Heart right ventricle (tissue), 16 donors: ENCODE measurements at regions of chr5 and their contacts with region 1.

Region 1: GRCh38 chr5:135466178-135467050 is 14.3 kb upstream of the TIFAB start:
- DNase-seq: peak; percentile 68 to 80
- ATAC-seq: peak; percentile 85 to 97 (median 93)
- H3K4me3 ChIP-seq: peak overlapping the region in 9 of 10 donors; percentile 6 to 44 (median 34)
- H3K27ac ChIP-seq: no peak overlapping the region
- H3K4me1 ChIP-seq: peaks cover 0 to 10% (median 7%) of the 10 kb centered on the region in 9 donors
- H3K27me3 ChIP-seq: peaks cover 3 to 94% (median 75%) of the 10 kb centered on the region in 7 donors
- CTCF ChIP-seq: peak; percentile 71 to 90 (median 86)

Region 2: GRCh38 chr5:135448791-135449507 is 17.5 kb before region 1 on chr5:
- intact Hi-C with region 1: no loop called
- DNase-seq: no peak
- ATAC-seq: no peak
- H3K4me3 ChIP-seq: no peak overlapping the region
- H3K27ac ChIP-seq: no peak overlapping the region
- H3K4me1 ChIP-seq: peaks cover 0 to 22% (median 0%) of the 10 kb centered on the region in 9 donors
- H3K27me3 ChIP-seq: peaks cover 0 to 6% (median 0%) of the 10 kb centered on the region in 7 donors
- CTCF ChIP-seq: no peak

Region 3: DNA sequence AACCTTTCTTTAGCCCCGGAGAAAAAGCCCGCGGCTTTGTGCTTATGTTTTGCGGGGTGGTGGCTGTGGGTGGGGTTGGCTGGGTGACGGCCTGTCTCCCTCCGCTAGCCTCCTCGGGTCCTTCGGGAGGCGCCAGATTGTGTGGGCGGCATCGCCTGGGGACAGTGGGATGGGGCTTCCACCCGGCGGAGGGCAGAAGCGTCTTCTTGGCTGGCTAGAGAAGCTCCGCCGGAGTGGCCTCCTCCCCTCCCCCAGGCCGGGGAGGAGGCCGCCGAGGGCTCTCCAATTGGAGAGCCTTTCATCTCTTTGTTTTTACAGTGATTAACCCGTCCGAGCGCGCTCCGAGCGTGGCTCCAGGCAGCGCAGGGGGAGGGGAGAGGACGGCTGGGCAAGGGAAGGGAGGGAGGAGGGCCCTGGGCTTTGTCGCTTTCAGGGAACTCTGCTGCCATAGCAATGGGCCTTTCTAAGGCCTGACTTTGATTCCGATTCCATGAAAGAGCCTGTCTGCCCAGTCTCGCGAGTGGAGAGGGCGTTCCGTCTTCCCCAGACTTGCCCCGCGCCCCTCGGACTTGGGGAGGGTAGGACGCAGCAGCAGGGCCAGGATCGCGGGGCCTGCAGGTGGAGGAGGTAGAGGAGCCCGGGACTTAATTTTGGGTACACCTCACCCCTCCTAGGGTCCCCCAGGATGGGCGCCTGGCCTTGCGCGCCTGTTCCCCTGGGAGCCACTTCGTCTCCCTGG is 22.5 kb after region 1 on chr5:
- intact Hi-C with region 1: no loop called
- DNase-seq: peak in 1 of 2 donors; percentile 14
- ATAC-seq: peak in 4 of 8 donors; percentile 26 to 55 (median 41)
- H3K4me3 ChIP-seq: peak overlapping the region; percentile 5 to 46 (median 36)
- H3K27ac ChIP-seq: no peak overlapping the region
- H3K4me1 ChIP-seq: peaks cover 2 to 38% (median 23%) of the 10 kb centered on the region in 9 donors
- H3K27me3 ChIP-seq: peaks cover 31 to 95% (median 88%) of the 10 kb centered on the region in 7 donors
- CTCF ChIP-seq: no peak

Region 4: DNA sequence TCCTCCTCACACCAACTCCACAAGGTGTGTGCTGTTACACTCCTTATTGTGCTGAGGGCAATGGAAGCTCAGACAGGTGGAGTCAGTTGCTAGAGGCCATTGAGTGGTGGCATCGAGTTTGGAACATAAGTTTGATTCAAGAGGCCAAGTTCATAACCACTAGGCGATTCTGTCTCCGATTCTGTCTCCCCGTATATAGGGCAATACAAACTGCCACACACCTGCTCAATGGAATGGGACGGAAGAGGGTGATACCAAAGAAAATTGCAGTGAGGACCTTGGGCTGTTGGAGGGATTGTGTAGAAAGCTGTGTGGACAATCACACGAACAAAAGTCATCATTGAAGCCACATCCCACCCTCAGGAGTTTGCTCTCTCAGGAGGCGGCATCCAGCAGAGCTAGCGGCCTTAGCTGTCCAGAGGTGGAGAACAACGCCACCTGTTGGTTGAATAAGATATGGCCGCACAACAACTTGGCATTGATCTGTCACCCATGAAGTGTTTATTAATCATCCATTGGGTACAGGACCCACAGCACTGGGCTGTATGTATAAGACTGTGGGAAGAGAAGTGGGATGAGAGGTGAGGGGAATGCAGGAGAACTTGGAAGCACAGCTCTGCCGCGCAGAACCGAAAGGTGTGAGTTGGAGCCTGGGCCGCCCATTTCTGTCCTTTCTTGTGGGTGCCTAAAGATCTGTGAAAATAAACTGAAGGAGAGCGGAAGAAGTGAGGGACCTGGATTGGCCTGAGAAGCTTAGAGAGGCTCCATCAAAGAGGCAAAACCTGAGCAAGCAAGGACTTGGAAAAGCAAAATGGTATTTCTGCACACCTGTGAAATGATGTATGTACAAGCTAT is 85.4 kb after region 1 on chr5:
- intact Hi-C with region 1: loop called (anchors 1 to 2 kb)
- DNase-seq: peak; percentile 34 to 64
- ATAC-seq: peak; percentile 63 to 80 (median 76)
- H3K4me3 ChIP-seq: no peak overlapping the region
- H3K27ac ChIP-seq: no peak overlapping the region
- H3K4me1 ChIP-seq: no peaks in the 10 kb centered on the region
- H3K27me3 ChIP-seq: peaks cover 0 to 93% (median 87%) of the 10 kb centered on the region in 7 donors
- CTCF ChIP-seq: peak; percentile 69 to 89 (median 84)

Region 5: DNA sequence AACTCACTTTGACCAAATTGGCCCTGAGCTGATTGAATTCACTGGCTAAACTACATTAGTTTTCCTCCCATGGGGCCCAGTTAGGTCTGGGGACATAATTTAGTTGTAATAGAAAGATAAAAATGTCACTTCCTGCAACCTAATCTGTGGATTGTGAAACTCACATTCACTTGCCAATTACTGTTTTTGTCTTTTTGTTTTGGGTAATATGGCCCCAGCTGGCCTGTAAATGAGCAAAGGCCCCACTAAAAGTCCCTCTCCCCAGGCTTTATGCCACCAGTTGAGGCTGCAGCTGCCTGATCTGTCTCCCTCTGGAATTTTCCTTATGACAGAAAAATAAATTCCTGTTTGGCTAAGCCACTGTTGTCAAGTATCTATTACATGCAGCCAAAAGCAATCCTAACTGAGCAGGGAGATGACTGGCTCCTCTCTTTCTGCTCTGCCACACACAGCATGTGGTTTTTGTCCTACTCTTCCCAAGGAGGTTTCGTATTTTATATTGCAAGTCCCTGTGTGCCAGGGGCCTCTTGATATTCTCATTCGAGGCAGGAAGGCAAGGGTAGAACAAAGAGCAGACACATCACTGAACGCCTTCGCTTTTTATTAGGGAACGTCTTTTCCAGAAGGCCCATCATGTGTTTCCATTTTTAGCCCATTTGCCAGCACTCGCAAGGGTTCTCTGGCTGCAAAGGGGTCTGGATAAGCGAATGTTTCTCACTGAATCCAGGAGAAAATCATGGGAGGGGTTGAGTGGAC is 344.0 kb after region 1 on chr5:
- intact Hi-C with region 1: loop called in 1 of 10 experiments (anchors 10 kb)
- DNase-seq: no peak
- ATAC-seq: peak in 5 of 8 donors; percentile 26 to 67 (median 52)
- H3K4me3 ChIP-seq: no peak overlapping the region
- H3K27ac ChIP-seq: peak overlapping the region in 2 of 10 donors; percentile 19 to 51
- H3K4me1 ChIP-seq: peaks cover 0 to 10% (median 0%) of the 10 kb centered on the region in 9 donors
- H3K27me3 ChIP-seq: peaks cover 0 to 4% (median 0%) of the 10 kb centered on the region in 7 donors
- CTCF ChIP-seq: no peak

Region 6: GRCh38 chr5:135829681-135830383 is 363.4 kb after region 1 on chr5:
- intact Hi-C with region 1: loop called in 6 of 10 experiments (anchors 5 to 10 kb)
- DNase-seq: peak; percentile 36 to 66
- ATAC-seq: peak; percentile 22 to 66 (median 54)
- H3K4me3 ChIP-seq: no peak overlapping the region
- H3K27ac ChIP-seq: no peak overlapping the region
- H3K4me1 ChIP-seq: peaks cover 0 to 9% (median 7%) of the 10 kb centered on the region in 9 donors
- H3K27me3 ChIP-seq: peaks cover 5 to 49% (median 40%) of the 10 kb centered on the region in 7 donors
- CTCF ChIP-seq: peak; percentile 58 to 82 (median 77)